ENCODE measurements at regions of chr18 and their contacts with region 1.

Region 1: DNA sequence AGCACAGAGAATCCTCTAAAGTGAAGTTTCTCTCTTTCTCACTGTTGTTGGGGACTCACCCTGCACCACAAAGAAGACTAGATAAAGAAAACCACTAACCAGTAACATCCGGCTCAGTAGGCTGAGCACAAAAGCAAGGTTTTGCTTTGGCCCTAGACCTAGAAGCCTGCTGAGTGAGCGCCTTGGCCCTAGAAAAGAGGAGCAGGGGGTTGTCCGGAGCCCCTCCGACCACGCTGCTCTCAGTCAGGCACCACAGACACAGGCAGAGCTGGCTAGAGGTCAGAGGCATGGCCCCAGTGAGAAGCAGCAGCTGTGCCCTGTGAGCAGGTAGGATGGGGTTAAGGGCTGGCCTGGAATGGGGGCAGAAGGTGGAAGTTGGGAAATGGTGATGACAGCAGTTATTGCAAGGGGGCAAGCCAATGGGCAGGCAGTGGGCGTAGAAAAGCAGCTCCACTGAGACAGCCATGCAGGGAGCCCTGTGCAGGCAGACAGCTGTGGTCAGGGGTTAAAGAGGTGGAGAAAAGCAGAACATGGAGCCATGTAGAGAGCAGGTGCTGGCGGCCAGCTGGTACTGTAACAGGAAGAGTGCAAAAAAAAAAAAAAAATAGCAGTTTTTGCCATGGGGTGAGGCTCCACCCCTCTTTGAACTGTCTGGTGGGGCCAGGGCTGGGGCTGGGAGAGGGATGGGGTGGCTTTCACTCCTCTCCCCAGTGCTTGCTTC is 36.9 kb upstream of the SLC14A1 start:
- DNase-seq: peak; percentile 24 to 70 (median 35)
- ATAC-seq: peak; percentile 81
- H3K4me3 ChIP-seq: no peak overlapping the region
- H3K4me1 ChIP-seq: no peaks in the 10 kb centered on the region
- CTCF ChIP-seq: no peak

Region 2: GRCh38 chr18:45974088-45974536 is 287.1 kb after region 1 on chr18:
- intact Hi-C with region 1: loop called in 1 of 2 experiments (anchors 10 kb)
- DNase-seq: peak in 2 of 3 donors; percentile 39 to 84
- ATAC-seq: peak; percentile 91
- H3K4me3 ChIP-seq: no peak overlapping the region
- H3K4me1 ChIP-seq: peaks cover 7% of the 10 kb centered on the region
- CTCF ChIP-seq: peak; percentile 39

Region 3: GRCh38 chr18:46190667-46191066 is 503.6 kb after region 1 on chr18:
- intact Hi-C with region 1: no loop called
- DNase-seq: no peak
- ATAC-seq: no peak
- H3K4me3 ChIP-seq: no peak overlapping the region
- H3K4me1 ChIP-seq: no peaks in the 10 kb centered on the region
- CTCF ChIP-seq: no peak

Measured in mucosa of descending colon (tissue), 3 donors.